GM12878 (cell line): ENCODE measurements at regions of chr11 and their contacts with region 1.

Region 1: GRCh38 chr11:104076455-104076854 is 40.0 kb downstream of the DDI1 start:
- DNase-seq: no peak
- ATAC-seq: no peak
- H3K4me3 ChIP-seq: no peak overlapping the region
- H3K27ac ChIP-seq: no peak overlapping the region
- H3K4me1 ChIP-seq: no peaks in the 10 kb centered on the region
- H3K27me3 ChIP-seq: no peaks in the 10 kb centered on the region; a peak in 1 of 4 replicates
- CTCF ChIP-seq: no peak
- EP300 ChIP-seq: no peak
- POLR2A ChIP-seq: no peak
- RAD21 ChIP-seq: no peak

Region 2: GRCh38 chr11:103395612-103396011 is 680.8 kb before region 1 on chr11:
- CTCF ChIA-PET with region 1: no interaction called
- POLR2A ChIA-PET with region 1: no interaction called
- RAD21 ChIA-PET with region 1: no interaction called
- SMC1A ChIA-PET with region 1: no interaction called
- in situ Hi-C with region 1: no loop called
- intact Hi-C with region 1: no loop called
- DNase-seq: no peak
- ATAC-seq: no peak
- H3K4me3 ChIP-seq: no peak overlapping the region
- H3K27ac ChIP-seq: no peak overlapping the region
- H3K4me1 ChIP-seq: no peaks in the 10 kb centered on the region
- H3K27me3 ChIP-seq: no peaks in the 10 kb centered on the region
- CTCF ChIP-seq: no peak
- EP300 ChIP-seq: no peak
- POLR2A ChIP-seq: no peak
- RAD21 ChIP-seq: no peak

Region 3: DNA sequence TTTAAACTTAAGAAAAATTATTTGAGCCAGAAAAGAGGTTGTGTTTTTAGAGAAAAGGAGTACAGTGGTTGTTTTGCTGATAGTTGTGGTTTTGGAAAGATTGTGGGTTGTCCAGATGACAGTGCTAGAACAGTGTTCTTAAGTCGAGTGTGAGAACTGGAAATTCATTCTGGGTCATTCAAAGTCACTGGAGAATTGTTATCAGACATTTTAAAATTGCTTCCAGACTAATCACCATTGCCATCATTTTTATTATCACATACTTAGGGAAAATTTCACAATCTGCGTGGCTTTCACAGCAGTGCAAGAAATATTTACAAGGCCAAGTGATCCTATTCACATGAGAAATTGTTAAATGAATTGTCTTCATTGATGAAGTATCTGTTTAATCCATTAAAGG is 282.2 kb before region 1 on chr11:
- CTCF ChIA-PET with region 1: no interaction called
- POLR2A ChIA-PET with region 1: no interaction called
- RAD21 ChIA-PET with region 1: no interaction called
- SMC1A ChIA-PET with region 1: no interaction called
- in situ Hi-C with region 1: no loop called
- intact Hi-C with region 1: no loop called
- DNase-seq: no peak
- ATAC-seq: no peak
- H3K4me3 ChIP-seq: no peak overlapping the region
- H3K27ac ChIP-seq: no peak overlapping the region
- H3K4me1 ChIP-seq: no peaks in the 10 kb centered on the region
- H3K27me3 ChIP-seq: 0 out of 4 replicates have a peak, but pooled peaks cover 0 to 2% of the 10 kb centered on the region in 2 experiments
- CTCF ChIP-seq: no peak
- EP300 ChIP-seq: no peak
- POLR2A ChIP-seq: no peak
- RAD21 ChIP-seq: no peak

Region 4: GRCh38 chr11:103875855-103876510 is 200.5 kb before region 1 on chr11:
- CTCF ChIA-PET with region 1: no interaction called
- POLR2A ChIA-PET with region 1: no interaction called
- RAD21 ChIA-PET with region 1: no interaction called
- SMC1A ChIA-PET with region 1: no interaction called
- in situ Hi-C with region 1: no loop called
- intact Hi-C with region 1: no loop called
- DNase-seq: no peak
- ATAC-seq: peak; percentile 46
- H3K4me3 ChIP-seq: no peak overlapping the region
- H3K27ac ChIP-seq: no peak overlapping the region
- H3K4me1 ChIP-seq: peaks cover 5% of the 10 kb centered on the region
- H3K27me3 ChIP-seq: no peaks in the 10 kb centered on the region
- CTCF ChIP-seq: no peak
- EP300 ChIP-seq: no peak
- POLR2A ChIP-seq: no peak
- RAD21 ChIP-seq: no peak

Region 5: GRCh38 chr11:104090767-104091166 is 14.3 kb after region 1 on chr11:
- CTCF ChIA-PET with region 1: no interaction called
- POLR2A ChIA-PET with region 1: no interaction called
- RAD21 ChIA-PET with region 1: no interaction called
- SMC1A ChIA-PET with region 1: interaction called, 11 read pairs
- in situ Hi-C with region 1: no loop called
- intact Hi-C with region 1: no loop called
- DNase-seq: no peak
- ATAC-seq: no peak
- H3K4me3 ChIP-seq: no peak overlapping the region
- H3K27ac ChIP-seq: no peak overlapping the region
- H3K4me1 ChIP-seq: no peaks in the 10 kb centered on the region
- H3K27me3 ChIP-seq: no peaks in the 10 kb centered on the region
- CTCF ChIP-seq: no peak
- EP300 ChIP-seq: no peak
- POLR2A ChIP-seq: no peak
- RAD21 ChIP-seq: no peak